Ovary (tissue), 10 donors: ENCODE measurements at regions of chr11 and their contacts with region 1.

Region 1: DNA sequence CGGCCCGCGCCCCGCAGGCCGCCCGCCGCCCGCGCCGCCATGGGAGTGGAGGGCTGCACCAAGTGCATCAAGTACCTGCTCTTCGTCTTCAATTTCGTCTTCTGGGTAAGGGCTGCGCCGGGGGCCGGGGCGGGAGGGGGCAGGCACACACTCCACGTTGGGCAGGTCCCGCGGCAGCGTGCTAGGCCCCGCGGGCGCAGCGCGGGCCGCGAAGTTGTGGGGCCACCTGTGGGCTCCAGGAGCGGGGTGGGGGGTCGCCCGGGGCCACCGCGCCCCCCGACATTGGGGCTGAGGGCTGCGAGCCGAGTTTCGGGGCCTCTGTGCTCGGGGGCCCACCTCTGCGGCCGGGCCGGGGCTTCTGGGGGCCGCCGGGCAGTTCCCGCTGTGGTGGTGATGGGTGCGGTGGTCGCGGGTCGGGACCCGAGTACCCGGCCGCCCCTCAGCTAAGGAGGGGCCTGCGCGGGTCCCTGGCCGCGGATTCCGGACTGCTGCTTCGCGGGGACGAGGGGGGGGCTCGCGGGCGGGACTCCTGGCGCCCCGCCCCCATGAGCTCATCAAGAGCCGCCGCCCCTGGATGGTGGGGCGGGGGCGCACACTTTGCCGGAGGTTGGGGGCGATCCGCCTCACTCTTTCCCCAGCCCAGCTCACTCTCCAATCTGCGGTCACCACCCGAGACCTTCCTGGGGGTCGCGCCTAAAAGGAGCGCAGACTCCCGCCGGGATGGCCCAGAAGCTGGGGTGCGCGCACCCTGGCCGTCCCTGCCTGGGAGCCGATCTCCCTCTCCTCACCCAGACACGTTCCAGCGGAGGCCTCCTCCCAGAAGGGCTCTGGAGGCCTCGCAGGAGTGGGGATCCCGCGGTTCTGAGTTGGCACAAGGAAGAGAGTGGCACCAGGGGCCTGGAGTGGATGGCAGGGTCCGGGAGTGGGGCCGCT is 667 bp downstream of the CD81 start:
- DNase-seq: peak; percentile 73 to 87 (median 85)
- H3K4me3 ChIP-seq: peak overlapping the region; percentile 99
- H3K27ac ChIP-seq: peak overlapping the region; percentile 88 to 94
- H3K4me1 ChIP-seq: peaks cover 25% of the 10 kb centered on the region
- H3K27me3 ChIP-seq: no peaks in the 10 kb centered on the region
- CTCF ChIP-seq: no peak
- EP300 ChIP-seq: no peak
- POLR2A ChIP-seq: peak; percentile 53

Region 2: GRCh38 chr11:2314525-2315394 is 63.0 kb before region 1 on chr11:
- intact Hi-C with region 1: loop called in 3 of 4 experiments (anchors 5 kb)
- DNase-seq: peak; percentile 95 to 99 (median 97)
- H3K4me3 ChIP-seq: no peak overlapping the region
- H3K27ac ChIP-seq: peak overlapping the region; percentile 77 to 83
- H3K4me1 ChIP-seq: peaks cover 22% of the 10 kb centered on the region
- H3K27me3 ChIP-seq: no peaks in the 10 kb centered on the region
- CTCF ChIP-seq: no peak
- EP300 ChIP-seq: no peak
- POLR2A ChIP-seq: no peak

Region 3: GRCh38 chr11:2400069-2400760 is 22.4 kb after region 1 on chr11 and contains the start of gene TSSC4:
- intact Hi-C with region 1: loop called in 1 of 4 experiments (anchors 1 kb)
- DNase-seq: peak; percentile 99 to 100 (median 100)
- H3K4me3 ChIP-seq: peak within 1 kb of the TSS; percentile 85
- H3K27ac ChIP-seq: peak within 1 kb of the TSS; percentile 80 to 98
- H3K4me1 ChIP-seq: peaks cover 4% of the 10 kb centered on the region
- H3K27me3 ChIP-seq: no peaks in the 10 kb centered on the region
- CTCF ChIP-seq: peak; percentile 97 to 99 (median 98)
- EP300 ChIP-seq: peak; percentile 99
- POLR2A ChIP-seq: peak; percentile 98
- total RNA-seq, gene TSSC4: 37.1 to 73.4 (median 49.4) TPM